Heart left ventricle (tissue), 16 donors: ENCODE measurements at regions of chr7 and their contacts with region 1.

Region 1: GRCh38 chr7:130352221-130353075 is 7.8 kb downstream of the CPA5 start:
- DNase-seq: no peak
- ATAC-seq: no peak
- H3K4me3 ChIP-seq: peak overlapping the region in 2 of 12 donors; percentile 16 to 18
- H3K27ac ChIP-seq: peak overlapping the region in 10 of 12 donors; percentile 31 to 83 (median 58)
- H3K4me1 ChIP-seq: peaks cover 0 to 34% (median 16%) of the 10 kb centered on the region in 12 donors
- H3K27me3 ChIP-seq: no peaks in the 10 kb centered on the region
- CTCF ChIP-seq: no peak
- POLR2A ChIP-seq: no peak

Region 2: GRCh38 chr7:130277763-130278643 is 74.4 kb before region 1 on chr7:
- intact Hi-C with region 1: loop called in 1 of 10 experiments (anchors 5 kb)
- DNase-seq: peak in 4 of 5 donors; percentile 47 to 57 (median 55)
- ATAC-seq: peak; percentile 37 to 88 (median 85)
- H3K4me3 ChIP-seq: no peak overlapping the region
- H3K27ac ChIP-seq: peak overlapping the region in 2 of 12 donors; percentile 12 to 16
- H3K4me1 ChIP-seq: peaks cover 0 to 15% (median 3%) of the 10 kb centered on the region in 12 donors
- H3K27me3 ChIP-seq: peaks cover 0 to 21% (median 0%) of the 10 kb centered on the region in 9 donors
- CTCF ChIP-seq: peak; percentile 42 to 82 (median 60)
- POLR2A ChIP-seq: no peak